Activated CD4-positive, alpha-beta T cell treated with anti-CD3 and anti-CD28 coated beads, Interleukin-2, amount 10 ng/mL, durations not matched to agents 24 days and 14 days (primary cell): ENCODE measurements at regions of chrX and their contacts with region 1.

Region 1: DNA sequence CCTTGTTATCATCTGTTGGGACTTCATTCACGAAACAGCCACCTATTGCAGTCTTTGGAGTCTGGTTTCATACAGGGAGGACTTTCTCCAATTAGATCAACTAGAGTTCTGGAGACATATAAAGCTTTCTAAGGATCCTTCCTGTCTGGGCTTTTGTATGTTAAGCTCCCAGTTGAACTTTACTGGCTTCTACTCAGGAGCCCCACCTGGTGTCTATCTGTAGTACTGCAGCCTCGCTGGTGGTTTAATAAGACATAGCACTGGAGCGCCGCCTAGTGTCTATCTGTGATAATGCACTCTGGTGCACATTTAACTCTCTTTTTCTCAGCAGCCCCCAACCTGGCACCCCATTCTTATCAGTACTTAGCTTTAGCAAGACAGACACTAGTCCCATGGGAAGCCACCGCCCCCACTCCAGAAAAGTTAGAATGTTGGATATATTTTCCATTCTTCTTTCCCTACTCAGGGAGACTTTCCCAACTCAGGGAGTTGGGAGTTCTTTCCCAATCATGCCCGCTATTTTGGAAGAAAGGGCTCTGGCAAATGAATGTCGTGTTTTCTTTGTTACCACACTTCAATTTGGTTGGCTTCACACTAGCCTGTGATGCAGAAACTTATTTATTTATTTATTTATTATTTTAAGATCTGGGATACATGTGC is 36.9 kb upstream of the SYTL4 start:
- DNase-seq: peak; percentile 94
- H3K4me3 Mint-ChIP-seq: no peak overlapping the region
- H3K27ac Mint-ChIP-seq: no peak overlapping the region
- H3K4me1 Mint-ChIP-seq: no peaks in the 10 kb centered on the region
- H3K27me3 Mint-ChIP-seq: peaks cover 24% of the 10 kb centered on the region

Region 2: GRCh38 chrX:100207331-100208024 is 561.3 kb before region 1 on chrX:
- intact Hi-C with region 1: no loop called
- DNase-seq: no peak
- H3K4me3 Mint-ChIP-seq: no peak overlapping the region
- H3K27ac Mint-ChIP-seq: no peak overlapping the region
- H3K4me1 Mint-ChIP-seq: no peaks in the 10 kb centered on the region
- H3K27me3 Mint-ChIP-seq: no peaks in the 10 kb centered on the region

Region 3: DNA sequence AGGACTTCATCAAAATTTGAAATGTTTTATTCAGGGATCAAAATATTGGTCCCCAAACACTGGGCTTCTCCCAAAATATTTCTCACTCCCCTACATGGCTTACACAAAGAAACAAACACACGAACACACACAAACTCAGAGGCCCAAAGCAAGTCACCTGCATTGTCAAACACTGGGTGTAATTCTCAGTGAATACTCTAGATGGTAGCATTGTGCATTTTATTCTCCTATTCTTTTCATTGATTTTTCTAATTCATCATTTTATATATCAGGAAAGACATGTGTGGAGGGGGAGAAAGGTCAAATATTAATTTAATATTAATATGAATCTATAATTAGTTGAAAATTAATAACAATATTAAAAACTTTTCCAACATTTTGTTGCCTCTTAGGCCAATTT is 256.3 kb before region 1 on chrX:
- intact Hi-C with region 1: loop called (anchors 5 kb)
- DNase-seq: no peak
- H3K4me3 Mint-ChIP-seq: no peak overlapping the region
- H3K27ac Mint-ChIP-seq: no peak overlapping the region
- H3K4me1 Mint-ChIP-seq: no peaks in the 10 kb centered on the region
- H3K27me3 Mint-ChIP-seq: no peaks in the 10 kb centered on the region

Region 4: DNA sequence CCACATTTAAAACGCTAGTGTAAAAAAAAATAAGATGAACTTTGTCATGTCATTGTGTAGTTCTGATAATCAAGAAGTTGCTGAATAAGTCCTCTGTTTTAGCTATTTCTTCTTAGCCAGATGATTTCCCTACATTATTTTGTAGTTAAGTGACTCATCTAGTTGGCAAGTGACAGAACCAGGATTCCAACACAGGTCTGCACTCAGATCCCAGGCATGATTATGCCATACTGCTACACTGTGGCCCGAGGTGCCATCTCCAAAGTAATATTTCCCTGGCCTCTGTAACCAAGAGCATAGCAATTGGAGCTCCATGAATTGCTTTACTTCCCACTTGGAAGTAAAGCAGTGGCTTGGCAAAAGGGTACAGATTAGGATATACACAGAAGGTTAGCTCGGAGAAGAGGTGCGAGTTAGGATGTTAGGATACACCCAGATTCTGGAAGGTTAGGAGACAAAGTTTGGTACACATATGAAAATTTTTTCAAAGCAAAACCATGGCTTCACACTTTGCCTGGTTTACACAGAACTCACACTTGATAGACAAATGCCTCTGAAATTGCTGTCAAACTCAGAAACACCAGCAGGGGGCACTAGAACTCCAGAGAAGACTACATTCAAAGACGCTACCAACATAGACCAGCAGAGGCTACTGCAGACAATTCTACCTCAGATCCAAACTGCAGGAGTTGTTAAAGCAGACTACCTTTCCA is 83.4 kb before region 1 on chrX:
- intact Hi-C with region 1: loop called (anchors 1 kb)
- DNase-seq: peak; percentile 87
- H3K4me3 Mint-ChIP-seq: no peak overlapping the region
- H3K27ac Mint-ChIP-seq: no peak overlapping the region
- H3K4me1 Mint-ChIP-seq: peaks cover 8% of the 10 kb centered on the region
- H3K27me3 Mint-ChIP-seq: peaks cover 5% of the 10 kb centered on the region